Thyroid gland (tissue), 4 donors: ENCODE measurements at regions of chr21 and their contacts with region 1.

Region 1: GRCh38 chr21:34351786-34352241 is 12.0 kb upstream of the KCNE2 start:
- DNase-seq: peak; percentile 73 to 75
- H3K4me3 ChIP-seq: no peak overlapping the region
- H3K27ac ChIP-seq: no peak overlapping the region
- H3K4me1 ChIP-seq: no peaks in the 10 kb centered on the region
- H3K27me3 ChIP-seq: no peaks in the 10 kb centered on the region
- CTCF ChIP-seq: peak; percentile 55 to 97 (median 76)
- POLR2A ChIP-seq: no peak

Region 2: DNA sequence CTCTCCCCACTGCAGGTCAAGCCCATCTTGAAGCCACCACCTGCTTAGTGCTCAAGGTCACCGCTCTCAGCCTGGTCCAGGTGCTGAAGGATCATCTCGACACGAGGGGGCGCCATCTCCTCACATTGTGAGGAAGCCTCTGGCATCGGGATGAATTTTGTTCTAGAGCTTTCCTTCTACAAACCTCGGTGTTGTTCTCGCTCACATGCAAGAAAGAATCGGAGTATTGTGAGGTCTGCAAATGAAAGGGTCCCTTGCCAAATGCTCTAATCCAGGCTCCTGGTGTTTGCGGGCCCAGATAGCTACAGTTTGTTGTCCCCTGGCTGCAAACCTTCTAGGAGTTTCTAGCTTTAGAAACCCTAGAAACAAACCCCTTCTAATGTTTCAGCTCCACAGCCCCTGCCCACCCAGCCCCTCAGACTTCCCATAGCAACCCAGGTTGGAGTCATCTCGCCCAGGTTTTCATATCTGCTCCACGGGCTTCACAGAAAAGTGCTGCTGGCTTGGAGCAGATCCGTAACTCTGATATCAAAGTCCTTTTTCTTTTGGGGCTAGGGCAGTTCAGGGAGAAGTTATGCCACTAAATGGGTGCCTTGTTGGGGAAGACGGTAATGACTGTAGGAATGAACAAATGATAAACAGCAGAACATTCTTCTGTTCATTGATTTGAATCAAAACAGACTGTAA is 427.6 kb before region 1 on chr21:
- intact Hi-C with region 1: loop called (anchors 2 kb)
- DNase-seq: peak; percentile 89 to 95
- H3K4me3 ChIP-seq: no peak overlapping the region
- H3K27ac ChIP-seq: peak overlapping the region in 2 of 3 donors; percentile 32 to 79
- H3K4me1 ChIP-seq: peaks cover 4 to 7% of the 10 kb centered on the region in 2 donors
- H3K27me3 ChIP-seq: no peaks in the 10 kb centered on the region
- CTCF ChIP-seq: peak; percentile 79 to 97 (median 92)
- POLR2A ChIP-seq: no peak

Region 3: DNA sequence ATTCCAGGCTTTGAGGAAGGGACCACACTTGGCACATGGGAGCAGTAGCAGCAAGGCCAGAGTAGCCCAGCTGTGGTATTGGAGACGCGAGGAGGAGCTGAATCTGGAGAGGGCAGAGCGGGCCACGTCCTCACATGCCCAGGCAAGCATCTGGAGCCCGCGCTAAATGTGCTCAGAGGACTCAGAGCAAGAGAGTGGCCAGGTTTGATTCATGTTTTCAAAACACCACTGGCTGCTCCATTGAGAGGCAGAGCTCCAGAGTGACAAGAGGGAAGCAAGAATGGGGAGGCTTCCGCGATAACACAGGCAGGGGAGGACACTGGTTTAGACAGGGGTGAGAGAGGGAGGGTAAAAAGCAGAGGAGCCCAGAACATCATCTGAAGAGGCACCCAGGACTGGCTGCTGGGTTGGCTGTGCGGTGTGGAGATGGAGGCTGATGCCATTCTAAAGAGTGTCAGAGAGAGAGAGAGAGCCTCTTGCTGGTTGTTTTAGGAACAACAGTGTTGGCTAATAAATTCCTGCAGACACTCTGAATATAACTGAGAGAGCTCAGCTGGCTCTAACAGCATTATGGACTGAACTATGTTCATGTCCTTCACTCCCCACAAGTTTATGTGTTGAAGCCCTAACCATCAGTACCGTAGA is 230.8 kb after region 1 on chr21:
- intact Hi-C with region 1: no loop called
- DNase-seq: no peak
- H3K4me3 ChIP-seq: no peak overlapping the region
- H3K27ac ChIP-seq: no peak overlapping the region
- H3K4me1 ChIP-seq: no peaks in the 10 kb centered on the region
- H3K27me3 ChIP-seq: no peaks in the 10 kb centered on the region
- CTCF ChIP-seq: peak in 2 of 6 experiments; percentile 14
- POLR2A ChIP-seq: no peak